Naive thymus-derived CD4-positive, alpha-beta T cell (primary cell): ENCODE measurements at regions of chr1 and their contacts with region 1.

Region 1: DNA sequence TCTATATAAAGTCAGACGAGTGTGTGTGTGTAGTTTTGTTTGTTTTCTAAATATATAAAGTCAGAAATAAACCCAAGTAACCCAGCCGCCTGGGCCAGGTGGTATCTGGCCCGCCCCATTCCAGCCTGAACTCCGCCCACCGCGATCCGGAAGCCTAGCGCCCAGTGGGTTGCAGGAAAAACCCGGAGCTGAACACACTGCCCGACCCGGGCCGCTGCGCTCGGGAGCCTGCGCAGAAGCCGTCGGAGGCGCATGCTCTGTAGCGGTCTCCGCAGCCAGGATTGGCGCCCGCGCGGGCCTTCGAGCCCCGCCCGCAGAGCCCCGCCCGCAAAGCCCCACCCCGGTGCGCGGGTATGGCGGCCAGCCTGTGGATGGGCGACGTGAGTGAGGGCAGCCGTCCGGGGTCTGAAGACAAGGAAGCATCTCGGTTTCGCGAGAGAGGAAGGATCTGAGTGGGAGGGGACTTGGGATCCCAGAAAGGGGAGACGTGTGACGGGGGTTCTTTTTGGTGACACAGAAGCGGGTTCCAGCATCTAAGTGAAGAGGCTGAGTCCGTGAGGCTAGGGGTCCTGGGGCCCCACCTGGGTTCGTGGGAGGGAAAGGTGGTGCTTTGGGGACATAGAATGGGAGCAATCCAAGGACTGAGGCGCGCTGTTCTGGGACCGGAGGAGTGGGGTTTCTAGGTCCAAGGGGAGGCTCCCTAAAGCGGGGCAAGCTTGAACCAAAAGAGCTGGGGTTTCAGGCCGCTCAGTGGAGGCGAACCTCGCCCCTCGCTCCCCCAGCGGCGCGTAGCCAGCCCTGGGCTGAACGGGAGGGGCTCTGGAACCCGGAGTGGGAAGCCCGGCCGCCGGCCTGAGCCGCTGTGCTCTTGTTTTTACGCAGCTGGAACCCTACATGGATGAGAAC is at the start of gene TRNAU1AP:
- DNase-seq: peak; percentile 92 to 98 (median 97)
- ATAC-seq: peak; percentile 98
- H3K4me3 ChIP-seq: peak within 1 kb of the TSS; percentile 95
- H3K4me3 Mint-ChIP-seq: peak within 1 kb of the TSS; percentile 94 to 99 (median 98)
- H3K27ac ChIP-seq: peak within 1 kb of the TSS; percentile 81
- H3K27ac Mint-ChIP-seq: peak within 1 kb of the TSS; percentile 94 to 99 (median 98)
- H3K4me1 ChIP-seq: peaks cover 0 to 15% of the 10 kb centered on the region in 2 donors
- H3K4me1 Mint-ChIP-seq: peaks cover 10 to 26% (median 19%) of the 10 kb centered on the region in 7 donors
- H3K27me3 ChIP-seq: no peaks in the 10 kb centered on the region
- H3K27me3 Mint-ChIP-seq: no peaks in the 10 kb centered on the region
- total RNA-seq, gene TRNAU1AP: 27.6 to 52.5 (median 40.9) TPM

Region 2: GRCh38 chr1:27341525-27342252 is 1211.3 kb before region 1 on chr1 and contains the start of gene SYTL1:
- CTCF ChIA-PET with region 1: no interaction called
- POLR2A ChIA-PET with region 1: no interaction called
- intact Hi-C with region 1: loop called in 1 of 2 experiments (anchors 5 kb)
- DNase-seq: peak; percentile 49 to 72 (median 60)
- ATAC-seq: peak; percentile 74
- H3K4me3 ChIP-seq: peak within 1 kb of the TSS; percentile 85
- H3K4me3 Mint-ChIP-seq: peak within 1 kb of the TSS; percentile 91 to 100 (median 96)
- H3K27ac ChIP-seq: peak within 1 kb of the TSS; percentile 87
- H3K27ac Mint-ChIP-seq: peak within 1 kb of the TSS; percentile 86 to 98 (median 94)
- H3K4me1 ChIP-seq: peaks cover 11 to 29% of the 10 kb centered on the region in 2 donors
- H3K4me1 Mint-ChIP-seq: peaks cover 22 to 68% (median 53%) of the 10 kb centered on the region in 7 donors
- H3K27me3 ChIP-seq: no peaks in the 10 kb centered on the region
- H3K27me3 Mint-ChIP-seq: no peaks in the 10 kb centered on the region
- total RNA-seq, gene SYTL1: 107 to 172 (median 136) TPM

Region 3: GRCh38 chr1:27872059-27872801 is 680.8 kb before region 1 on chr1 and contains the start of gene THEMIS2:
- CTCF ChIA-PET with region 1: no interaction called
- POLR2A ChIA-PET with region 1: no interaction called
- intact Hi-C with region 1: loop called in 1 of 2 experiments (anchors 2 kb)
- DNase-seq: peak; percentile 46 to 81 (median 67)
- ATAC-seq: peak; percentile 81
- H3K4me3 ChIP-seq: peak within 1 kb of the TSS; percentile 87
- H3K4me3 Mint-ChIP-seq: peak within 1 kb of the TSS; percentile 89 to 99 (median 98)
- H3K27ac ChIP-seq: peak within 1 kb of the TSS; percentile 79
- H3K27ac Mint-ChIP-seq: peak within 1 kb of the TSS; percentile 81 to 96 (median 91)
- H3K4me1 ChIP-seq: peaks cover 34 to 39% of the 10 kb centered on the region in 2 donors
- H3K4me1 Mint-ChIP-seq: peaks cover 29 to 70% (median 48%) of the 10 kb centered on the region in 7 donors
- H3K27me3 ChIP-seq: no peaks in the 10 kb centered on the region
- H3K27me3 Mint-ChIP-seq: no peaks in the 10 kb centered on the region
- total RNA-seq, gene THEMIS2: 48.8 to 234 (median 72.3) TPM

Region 4: GRCh38 chr1:28329395-28330153 is 223.4 kb before region 1 on chr1:
- CTCF ChIA-PET with region 1: no interaction called
- POLR2A ChIA-PET with region 1: interaction called, 4 read pairs
- intact Hi-C with region 1: loop called in 1 of 2 experiments (anchors 2 kb)
- DNase-seq: peak in 2 of 9 donors; percentile 32 to 48
- ATAC-seq: peak; percentile 14
- H3K4me3 ChIP-seq: peak overlapping the region; percentile 59
- H3K4me3 Mint-ChIP-seq: peak overlapping the region; percentile 89 to 98 (median 92)
- H3K27ac ChIP-seq: peak overlapping the region; percentile 86
- H3K27ac Mint-ChIP-seq: peak overlapping the region; percentile 92 to 100 (median 98)
- H3K4me1 ChIP-seq: peaks cover 13 to 14% of the 10 kb centered on the region in 2 donors
- H3K4me1 Mint-ChIP-seq: peaks cover 20 to 40% (median 39%) of the 10 kb centered on the region in 7 donors
- H3K27me3 ChIP-seq: no peaks in the 10 kb centered on the region
- H3K27me3 Mint-ChIP-seq: peaks cover 0 to 3% (median 0%) of the 10 kb centered on the region in 5 donors

Region 5: GRCh38 chr1:28518000-28518744 is 34.8 kb before region 1 on chr1:
- CTCF ChIA-PET with region 1: interaction called, 3 read pairs
- POLR2A ChIA-PET with region 1: interaction called, 6 read pairs
- intact Hi-C with region 1: loop called (anchors 1 kb)
- DNase-seq: peak; percentile 77 to 94 (median 84)
- ATAC-seq: peak; percentile 95
- H3K4me3 ChIP-seq: peak overlapping the region; percentile 81
- H3K4me3 Mint-ChIP-seq: peak overlapping the region; percentile 76 to 91 (median 88)
- H3K27ac ChIP-seq: peak overlapping the region; percentile 76
- H3K27ac Mint-ChIP-seq: peak overlapping the region; percentile 59 to 91 (median 83)
- H3K4me1 ChIP-seq: peaks cover 9 to 10% of the 10 kb centered on the region in 2 donors
- H3K4me1 Mint-ChIP-seq: peaks cover 16 to 46% (median 23%) of the 10 kb centered on the region in 7 donors
- H3K27me3 ChIP-seq: no peaks in the 10 kb centered on the region
- H3K27me3 Mint-ChIP-seq: no peaks in the 10 kb centered on the region

Region 6: DNA sequence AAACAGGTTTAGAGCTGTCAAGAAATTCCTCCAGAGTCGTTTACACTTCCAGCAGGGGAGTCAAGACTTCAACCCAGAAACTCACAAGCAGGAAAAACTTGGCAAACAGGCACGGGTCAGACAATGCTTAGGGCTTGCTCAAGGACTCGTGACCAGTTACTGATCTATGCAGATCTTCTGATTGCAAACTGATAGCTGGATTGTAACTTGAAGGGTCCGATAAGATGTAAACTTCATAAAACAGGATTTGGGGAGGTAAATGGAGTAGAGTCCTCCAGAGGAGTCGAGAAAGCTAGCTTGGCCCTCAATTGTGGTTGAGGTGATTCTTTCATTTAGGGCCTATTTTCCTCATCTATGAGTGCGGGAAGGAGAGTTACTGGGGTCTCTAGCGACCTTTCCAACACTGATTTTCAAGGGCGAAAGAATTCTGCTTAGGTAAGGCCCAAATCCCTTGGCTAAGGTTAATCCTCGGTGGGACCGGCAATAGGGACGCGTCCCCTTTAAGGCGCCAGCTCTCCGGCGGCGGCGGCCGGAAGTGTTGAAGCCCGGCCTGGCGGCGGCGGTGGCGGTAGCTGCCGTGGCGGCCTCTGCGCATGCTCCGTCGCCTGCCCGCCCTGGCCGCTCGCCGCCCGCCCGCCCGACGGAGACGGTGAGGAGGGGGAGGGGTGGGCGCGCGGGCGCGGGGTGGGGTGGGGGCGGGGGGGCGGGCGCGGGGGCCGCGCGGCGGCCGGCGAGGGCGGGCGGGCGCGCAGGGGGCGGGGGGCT is 115.4 kb after region 1 on chr1 and contains the start of gene GMEB1:
- CTCF ChIA-PET with region 1: no interaction called
- POLR2A ChIA-PET with region 1: interaction called, 6 read pairs
- intact Hi-C with region 1: loop called in 1 of 2 experiments (anchors 1 kb)
- DNase-seq: peak; percentile 70 to 91 (median 82)
- ATAC-seq: peak; percentile 81
- H3K4me3 ChIP-seq: peak within 1 kb of the TSS; percentile 81
- H3K4me3 Mint-ChIP-seq: peak within 1 kb of the TSS; percentile 89 to 97 (median 94)
- H3K27ac ChIP-seq: peak within 1 kb of the TSS; percentile 98
- H3K27ac Mint-ChIP-seq: peak within 1 kb of the TSS; percentile 94 to 100 (median 98)
- H3K4me1 ChIP-seq: peaks cover 3 to 6% of the 10 kb centered on the region in 2 donors
- H3K4me1 Mint-ChIP-seq: peaks cover 11 to 37% (median 25%) of the 10 kb centered on the region in 7 donors
- H3K27me3 ChIP-seq: no peaks in the 10 kb centered on the region
- H3K27me3 Mint-ChIP-seq: no peaks in the 10 kb centered on the region
- total RNA-seq, gene GMEB1: 15.8 to 26.7 (median 18.4) TPM